ENCODE measurements at regions of chr4 and their contacts with region 1.

Region 1: DNA sequence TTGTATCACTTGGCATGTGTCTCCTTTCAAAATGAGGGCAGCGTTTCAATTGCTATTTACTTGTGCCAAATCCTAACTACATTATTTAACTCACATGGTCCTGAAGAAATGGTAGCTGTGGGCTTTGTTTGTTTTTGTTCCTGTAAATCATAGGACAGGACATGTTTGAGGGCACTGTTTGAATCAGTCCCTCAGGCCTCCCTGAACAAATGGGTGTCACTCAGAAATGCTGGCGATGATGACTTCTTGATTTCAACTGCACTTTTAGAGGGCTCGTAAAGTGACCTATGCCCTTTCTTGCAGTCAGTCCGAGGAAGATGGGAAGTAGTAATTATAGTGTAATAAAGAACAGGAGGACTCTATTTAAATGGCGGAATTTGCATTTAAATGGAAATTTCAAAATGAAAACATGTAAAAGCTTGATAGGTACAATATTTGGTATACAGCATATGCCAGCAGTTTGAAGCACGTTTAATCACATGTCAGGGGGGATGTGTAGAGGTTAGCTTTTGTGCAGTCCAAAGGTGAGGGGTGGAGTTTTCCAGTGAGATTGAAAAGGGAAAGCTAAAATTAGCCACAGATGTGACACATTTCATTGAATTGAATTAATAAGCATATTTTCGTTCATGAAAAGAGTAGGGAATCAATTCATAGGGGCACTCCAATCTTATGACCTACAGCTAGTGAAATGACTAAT is 1958.7 kb upstream of the IGFBP7 start:
- DNase-seq: no peak

Region 2: GRCh38 chr4:60002603-60003337 is 933.9 kb after region 1 on chr4:
- intact Hi-C with region 1: loop called in 1 of 2 experiments (anchors 10 kb)
- DNase-seq: no peak